H1 (cell line): ENCODE measurements at regions of chr1 and their contacts with region 1.

Region 1: DNA sequence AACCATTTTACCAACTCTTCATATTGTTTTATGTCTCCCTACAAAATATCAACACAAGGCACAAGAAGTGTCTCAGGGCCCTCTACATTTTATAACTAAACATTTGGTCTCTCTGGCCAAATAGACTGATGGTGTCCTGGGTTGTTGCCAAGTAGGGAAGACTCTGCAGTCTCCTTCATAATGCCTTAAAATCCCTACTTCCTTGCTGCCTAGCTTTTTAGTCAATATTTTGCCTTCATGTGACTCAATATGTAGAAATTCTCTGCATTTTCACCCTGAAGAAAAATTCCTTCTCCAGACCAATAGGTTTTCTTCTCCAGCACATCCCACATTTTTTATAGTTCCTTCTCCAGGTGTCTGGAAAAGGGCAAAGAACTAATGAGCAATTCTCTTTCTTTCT is 72.6 kb upstream of the IPO9 start:
- DNase-seq: no peak
- H3K4me3 ChIP-seq: no peak overlapping the region
- H3K27ac ChIP-seq: no peak overlapping the region
- H3K4me1 ChIP-seq: peaks cover 9 to 31% (median 22%) of the 10 kb centered on the region in 4 experiments
- H3K27me3 ChIP-seq: no peaks in the 10 kb centered on the region
- CTCF ChIP-seq: no peak
- EP300 ChIP-seq: no peak
- POLR2A ChIP-seq: no peak
- RAD21 ChIP-seq: no peak

Region 2: DNA sequence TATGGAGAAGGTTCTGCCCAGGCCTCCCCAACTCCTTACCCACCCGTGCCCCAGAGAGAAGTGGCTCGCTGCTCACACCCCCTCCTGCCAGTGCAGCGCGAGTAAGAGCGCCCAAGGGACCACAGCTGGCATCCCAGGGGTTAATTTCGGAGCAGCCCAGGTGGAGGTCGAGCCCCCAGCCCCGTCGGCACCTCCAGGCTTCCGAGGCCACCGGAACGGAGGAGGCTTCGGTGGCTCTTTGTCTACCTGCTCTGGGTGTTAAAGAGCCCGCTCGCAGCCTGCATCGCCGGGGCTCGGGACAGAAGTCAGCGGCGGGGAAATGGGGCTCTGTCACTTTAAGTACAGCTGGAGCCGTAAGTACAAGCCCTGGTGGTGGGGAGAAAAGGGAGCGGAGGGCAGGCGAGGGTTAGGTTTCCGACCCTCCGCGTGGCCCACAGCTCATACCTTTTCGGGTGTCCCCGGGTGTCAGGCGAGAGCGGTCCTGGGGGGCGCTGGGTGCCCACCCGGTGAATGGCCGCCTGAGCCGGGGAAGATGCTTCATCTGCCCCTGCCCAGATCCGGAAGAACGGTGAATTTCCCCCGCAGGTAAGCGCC is 16.8 kb before region 1 on chr1:
- CTCF ChIA-PET with region 1: interaction called, 15 read pairs
- POLR2A ChIA-PET with region 1: interaction called, 7 read pairs
- DNase-seq: peak in 1 of 2 experiments; percentile 77
- H3K4me3 ChIP-seq: peak overlapping the region; percentile 70 to 86 (median 84)
- H3K27ac ChIP-seq: no peak overlapping the region
- H3K4me1 ChIP-seq: peaks cover 37 to 49% (median 44%) of the 10 kb centered on the region in 4 experiments
- H3K27me3 ChIP-seq: no peaks in the 10 kb centered on the region
- CTCF ChIP-seq: no peak
- EP300 ChIP-seq: no peak
- POLR2A ChIP-seq: no peak
- RAD21 ChIP-seq: no peak; a peak in 1 of 4 replicates

Region 3: DNA sequence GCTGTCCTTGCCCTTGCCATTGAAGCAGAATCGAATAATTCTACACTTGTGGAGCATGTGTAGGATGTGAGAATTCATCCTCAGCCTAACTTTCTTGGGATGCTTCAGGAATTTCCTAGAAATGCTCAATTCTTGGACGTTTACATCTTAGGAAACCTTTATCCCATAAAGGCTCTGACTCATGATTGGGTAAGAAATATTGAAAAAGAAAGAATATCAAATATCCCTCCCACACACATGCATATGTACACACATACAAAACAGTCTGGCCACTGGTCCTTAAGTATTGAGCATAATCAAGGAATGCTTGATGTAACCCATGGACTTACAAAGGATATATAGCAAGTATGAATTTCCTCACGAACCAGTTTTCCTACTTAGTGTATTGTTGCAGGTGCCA is 11.4 kb before region 1 on chr1:
- CTCF ChIA-PET with region 1: interaction called, 15 read pairs
- POLR2A ChIA-PET with region 1: interaction called, 7 read pairs
- DNase-seq: no peak
- H3K4me3 ChIP-seq: no peak overlapping the region
- H3K27ac ChIP-seq: no peak overlapping the region
- H3K4me1 ChIP-seq: peaks cover 5 to 20% (median 13%) of the 10 kb centered on the region in 4 experiments
- H3K27me3 ChIP-seq: no peaks in the 10 kb centered on the region
- CTCF ChIP-seq: no peak
- EP300 ChIP-seq: no peak
- POLR2A ChIP-seq: no peak
- RAD21 ChIP-seq: no peak

Region 4: DNA sequence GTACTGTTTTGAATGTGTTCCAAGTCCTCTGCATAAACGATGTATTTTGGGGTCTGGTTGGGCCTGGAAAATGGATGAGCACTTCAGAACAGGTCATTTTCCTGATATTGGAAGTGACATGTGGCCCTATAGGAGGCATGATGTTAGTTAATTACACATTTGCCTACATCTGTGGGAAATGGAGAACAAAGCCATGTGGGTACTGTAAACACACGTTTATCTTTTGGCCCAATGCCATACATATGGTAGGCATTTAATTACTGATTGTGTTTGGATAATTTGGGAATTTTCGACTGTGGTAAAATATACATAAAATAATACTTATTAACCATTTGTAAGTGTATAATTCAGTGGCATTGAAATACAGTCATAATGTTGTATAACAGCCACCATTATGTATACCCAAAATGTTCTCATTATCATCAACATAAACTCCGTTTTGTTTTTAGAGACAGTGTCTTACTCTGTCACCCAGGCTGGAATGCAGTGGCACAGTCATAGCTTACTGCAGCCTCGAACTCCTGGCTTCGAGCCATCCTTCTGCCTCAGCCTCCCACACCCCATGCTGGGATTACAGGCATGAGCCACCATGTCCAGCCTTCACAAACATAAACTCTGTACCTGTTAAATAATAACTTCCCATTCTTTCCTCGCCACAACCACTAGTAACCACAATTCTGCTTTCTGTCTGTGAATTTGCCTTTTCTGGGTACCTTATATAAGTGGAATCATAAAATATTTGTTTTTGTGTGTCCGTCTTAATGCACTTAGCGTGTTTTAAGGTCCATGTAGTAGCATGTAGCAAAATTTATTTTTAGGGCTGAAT is 214.1 kb after region 1 on chr1:
- CTCF ChIA-PET with region 1: no interaction called
- POLR2A ChIA-PET with region 1: no interaction called
- DNase-seq: no peak
- H3K4me3 ChIP-seq: no peak overlapping the region
- H3K27ac ChIP-seq: no peak overlapping the region
- H3K4me1 ChIP-seq: no peaks in the 10 kb centered on the region
- H3K27me3 ChIP-seq: no peaks in the 10 kb centered on the region
- CTCF ChIP-seq: no peak
- EP300 ChIP-seq: no peak
- POLR2A ChIP-seq: no peak
- RAD21 ChIP-seq: no peak